CD14-positive monocyte (primary cell): ENCODE measurements at regions of chr2 and their contacts with region 1.

Region 1: GRCh38 chr2:16608661-16609643 is 56.7 kb downstream of the CYRIA start:
- DNase-seq: peak; percentile 71 to 81 (median 78)
- H3K4me3 ChIP-seq: peak overlapping the region; percentile 18 to 72 (median 32)
- H3K4me3 Mint-ChIP-seq: peak overlapping the region; percentile 67 to 87
- H3K27ac ChIP-seq: peak overlapping the region in 1 of 2 donors; percentile 66
- H3K27ac Mint-ChIP-seq: peak overlapping the region; percentile 81 to 91 (median 84)
- H3K4me1 ChIP-seq: peaks cover 9 to 21% of the 10 kb centered on the region in 2 donors
- H3K4me1 Mint-ChIP-seq: peaks cover 35% of the 10 kb centered on the region
- H3K27me3 ChIP-seq: no peaks in the 10 kb centered on the region
- H3K27me3 Mint-ChIP-seq: peaks cover 0 to 4% (median 0%) of the 10 kb centered on the region in 3 donors
- CTCF ChIP-seq: peak; percentile 99

Region 2: GRCh38 chr2:16559278-16560067 is 49.5 kb before region 1 on chr2:
- intact Hi-C with region 1: loop called in 1 of 2 experiments (anchors 5 kb)
- DNase-seq: no peak
- H3K4me3 ChIP-seq: no peak overlapping the region
- H3K4me3 Mint-ChIP-seq: no peak overlapping the region
- H3K27ac ChIP-seq: no peak overlapping the region
- H3K27ac Mint-ChIP-seq: peak overlapping the region in 2 of 7 donors; percentile 28 to 47
- H3K4me1 ChIP-seq: no peaks in the 10 kb centered on the region
- H3K4me1 Mint-ChIP-seq: no peaks in the 10 kb centered on the region
- H3K27me3 ChIP-seq: no peaks in the 10 kb centered on the region
- H3K27me3 Mint-ChIP-seq: no peaks in the 10 kb centered on the region
- CTCF ChIP-seq: no peak

Region 3: DNA sequence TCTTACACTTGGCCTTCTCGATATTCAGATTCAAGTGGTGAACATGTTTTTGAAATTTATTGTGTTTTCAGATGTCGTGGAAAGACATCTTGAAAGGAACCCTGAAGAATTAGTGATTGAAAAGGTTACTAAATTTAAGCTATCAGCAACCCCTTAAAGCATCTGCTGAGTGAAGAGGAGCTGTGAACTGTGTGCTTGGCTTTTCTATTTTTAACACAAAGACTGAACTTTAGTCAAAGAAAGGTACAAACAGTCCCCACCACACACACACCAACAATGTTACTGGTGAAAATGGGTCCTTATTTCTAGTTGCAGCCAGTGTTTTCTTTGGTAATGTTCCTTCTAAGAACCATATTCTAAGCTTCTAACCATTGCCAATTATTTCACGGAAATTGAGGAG is 38.4 kb before region 1 on chr2:
- intact Hi-C with region 1: no loop called
- DNase-seq: no peak
- H3K4me3 ChIP-seq: no peak overlapping the region
- H3K4me3 Mint-ChIP-seq: no peak overlapping the region
- H3K27ac ChIP-seq: no peak overlapping the region
- H3K27ac Mint-ChIP-seq: no peak overlapping the region
- H3K4me1 ChIP-seq: no peaks in the 10 kb centered on the region
- H3K4me1 Mint-ChIP-seq: no peaks in the 10 kb centered on the region
- H3K27me3 ChIP-seq: no peaks in the 10 kb centered on the region
- H3K27me3 Mint-ChIP-seq: no peaks in the 10 kb centered on the region
- CTCF ChIP-seq: no peak

Region 4: DNA sequence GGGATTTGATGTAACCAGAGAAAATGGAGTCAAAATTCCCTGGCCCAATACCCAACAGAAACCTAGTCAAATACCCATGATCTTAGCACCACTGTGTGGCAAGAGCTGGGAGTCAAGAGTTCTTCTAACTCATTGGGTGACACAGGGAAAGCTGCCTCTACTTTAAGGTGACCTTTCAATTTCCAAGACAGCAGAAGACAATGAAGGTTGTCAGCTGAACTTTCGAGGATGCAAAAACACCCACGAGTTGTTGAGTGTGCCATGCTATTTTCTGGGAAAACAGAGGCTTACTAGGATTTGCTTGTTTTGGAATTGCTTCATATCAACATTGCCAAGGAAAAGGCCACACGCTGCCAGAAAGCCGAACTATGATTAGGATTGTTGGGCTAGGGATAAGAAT is 118.3 kb after region 1 on chr2:
- intact Hi-C with region 1: loop called in 1 of 2 experiments (anchors 5 kb)
- DNase-seq: peak in 2 of 3 donors; percentile 10 to 15
- H3K4me3 ChIP-seq: no peak overlapping the region
- H3K4me3 Mint-ChIP-seq: no peak overlapping the region
- H3K27ac ChIP-seq: no peak overlapping the region
- H3K27ac Mint-ChIP-seq: no peak overlapping the region
- H3K4me1 ChIP-seq: no peaks in the 10 kb centered on the region
- H3K4me1 Mint-ChIP-seq: peaks cover 2% of the 10 kb centered on the region
- H3K27me3 ChIP-seq: no peaks in the 10 kb centered on the region
- H3K27me3 Mint-ChIP-seq: peaks cover 4 to 12% (median 9%) of the 10 kb centered on the region in 3 donors
- CTCF ChIP-seq: peak; percentile 9